Activated CD4-positive, alpha-beta memory T cell treated with anti-CD3 and anti-CD28 coated beads for 36 hours (primary cell): ENCODE measurements at regions of chr7 and their contacts with region 1.

Region 1: GRCh38 chr7:35701287-35701900 is 6.5 kb upstream of the HERPUD2 start:
- DNase-seq: peak; percentile 46
- H3K4me3 Mint-ChIP-seq: no peak overlapping the region
- H3K27ac Mint-ChIP-seq: no peak overlapping the region
- H3K4me1 Mint-ChIP-seq: peaks cover 34% of the 10 kb centered on the region
- H3K27me3 Mint-ChIP-seq: no peaks in the 10 kb centered on the region

Region 2: GRCh38 chr7:35454575-35455385 is 246.6 kb before region 1 on chr7:
- CTCF ChIA-PET with region 1: no interaction called
- POLR2A ChIA-PET with region 1: no interaction called
- intact Hi-C with region 1: no loop called
- DNase-seq: no peak
- H3K4me3 Mint-ChIP-seq: no peak overlapping the region
- H3K27ac Mint-ChIP-seq: no peak overlapping the region
- H3K4me1 Mint-ChIP-seq: peaks cover 3% of the 10 kb centered on the region
- H3K27me3 Mint-ChIP-seq: peaks cover 42% of the 10 kb centered on the region

Region 3: DNA sequence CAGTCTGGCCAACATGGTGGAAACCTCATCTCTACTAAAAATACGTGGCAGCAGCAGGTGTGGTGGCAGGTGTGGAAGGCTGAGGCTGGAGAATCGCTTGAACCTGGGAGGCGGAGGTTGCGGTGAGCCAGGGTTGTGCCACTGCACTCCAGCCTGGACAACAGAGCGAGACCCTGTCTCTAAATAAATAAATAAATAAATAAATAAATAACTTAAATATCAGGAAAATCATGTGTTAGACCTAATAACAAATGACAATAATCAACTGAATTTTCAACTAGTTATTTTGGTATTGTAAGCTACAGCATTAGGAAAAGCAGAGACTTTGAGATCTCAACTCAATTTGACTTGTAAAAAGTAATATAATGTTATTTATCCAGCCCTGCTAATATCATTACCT is 15.6 kb before region 1 on chr7:
- CTCF ChIA-PET with region 1: no interaction called
- POLR2A ChIA-PET with region 1: no interaction called
- intact Hi-C with region 1: no loop called
- DNase-seq: no peak
- H3K4me3 Mint-ChIP-seq: no peak overlapping the region
- H3K27ac Mint-ChIP-seq: no peak overlapping the region
- H3K4me1 Mint-ChIP-seq: peaks cover 64% of the 10 kb centered on the region
- H3K27me3 Mint-ChIP-seq: no peaks in the 10 kb centered on the region

Region 4: GRCh38 chr7:35714862-35715261 is 13.5 kb after region 1 on chr7:
- CTCF ChIA-PET with region 1: interaction called, 13 read pairs
- POLR2A ChIA-PET with region 1: no interaction called
- intact Hi-C with region 1: no loop called
- DNase-seq: no peak
- H3K4me3 Mint-ChIP-seq: no peak overlapping the region
- H3K27ac Mint-ChIP-seq: no peak overlapping the region
- H3K4me1 Mint-ChIP-seq: peaks cover 5% of the 10 kb centered on the region
- H3K27me3 Mint-ChIP-seq: no peaks in the 10 kb centered on the region

Region 5: DNA sequence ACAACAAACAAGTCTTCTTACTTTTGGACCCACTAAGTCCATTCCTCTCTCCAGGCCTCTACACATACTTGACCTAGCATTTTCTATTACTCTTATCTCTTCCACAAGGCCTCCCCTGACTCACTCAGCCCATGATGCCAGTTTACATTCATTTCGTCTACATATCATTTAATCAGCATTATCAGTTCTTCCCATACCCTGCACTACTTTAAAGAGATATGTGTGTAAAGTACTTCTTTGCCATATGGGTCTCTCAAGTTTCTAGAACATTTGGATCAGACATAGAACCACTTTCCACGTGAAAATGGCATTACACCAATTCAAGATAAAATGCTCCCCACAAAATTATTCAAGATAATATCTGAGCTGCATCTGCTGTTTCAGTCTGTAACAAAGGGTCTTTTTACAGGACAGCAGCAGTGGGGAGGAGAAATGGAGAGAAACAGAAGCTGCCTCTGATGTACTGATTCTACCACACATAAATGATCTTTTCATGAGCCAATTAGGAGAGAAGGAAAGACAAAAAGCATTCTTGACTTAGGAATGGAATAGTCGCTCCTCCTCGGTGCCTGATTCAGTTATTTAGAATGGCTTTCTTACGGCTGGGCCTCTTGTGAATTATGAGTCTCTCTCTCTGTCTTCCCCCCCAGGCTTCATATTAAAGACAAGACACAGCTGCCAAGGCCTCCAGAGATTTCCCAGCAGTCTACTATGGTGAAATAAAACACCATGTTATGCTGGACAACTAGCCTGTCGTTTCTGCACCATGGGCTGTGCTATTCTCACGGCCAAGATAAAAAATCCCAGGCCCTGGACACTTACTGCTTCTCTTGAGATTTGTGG is 52.6 kb after region 1 on chr7:
- CTCF ChIA-PET with region 1: no interaction called
- POLR2A ChIA-PET with region 1: no interaction called
- intact Hi-C with region 1: no loop called
- DNase-seq: no peak
- H3K4me3 Mint-ChIP-seq: no peak overlapping the region
- H3K27ac Mint-ChIP-seq: no peak overlapping the region
- H3K4me1 Mint-ChIP-seq: peaks cover 2% of the 10 kb centered on the region
- H3K27me3 Mint-ChIP-seq: no peaks in the 10 kb centered on the region

Region 6: GRCh38 chr7:36001546-36001945 is 300.2 kb after region 1 on chr7:
- CTCF ChIA-PET with region 1: no interaction called
- POLR2A ChIA-PET with region 1: no interaction called
- intact Hi-C with region 1: no loop called
- DNase-seq: no peak
- H3K4me3 Mint-ChIP-seq: no peak overlapping the region
- H3K27ac Mint-ChIP-seq: no peak overlapping the region
- H3K4me1 Mint-ChIP-seq: peaks cover 5% of the 10 kb centered on the region
- H3K27me3 Mint-ChIP-seq: no peaks in the 10 kb centered on the region